Activated T-helper 1 cell treated with anti-CD3 and anti-CD28 coated beads, Interleukin-12 subunit alpha, Interleukin-12 subunit beta, Interleukin-2, Interleukin-4 antibody, amounts not matched to agents 30 ng/mL and 10 ng/mL and 1 ng/mL, durations not matched to agents 14 hours and 24 hours and 36 hours (primary cell): ENCODE measurements at regions of chr2 and their contacts with region 1.

Region 1: DNA sequence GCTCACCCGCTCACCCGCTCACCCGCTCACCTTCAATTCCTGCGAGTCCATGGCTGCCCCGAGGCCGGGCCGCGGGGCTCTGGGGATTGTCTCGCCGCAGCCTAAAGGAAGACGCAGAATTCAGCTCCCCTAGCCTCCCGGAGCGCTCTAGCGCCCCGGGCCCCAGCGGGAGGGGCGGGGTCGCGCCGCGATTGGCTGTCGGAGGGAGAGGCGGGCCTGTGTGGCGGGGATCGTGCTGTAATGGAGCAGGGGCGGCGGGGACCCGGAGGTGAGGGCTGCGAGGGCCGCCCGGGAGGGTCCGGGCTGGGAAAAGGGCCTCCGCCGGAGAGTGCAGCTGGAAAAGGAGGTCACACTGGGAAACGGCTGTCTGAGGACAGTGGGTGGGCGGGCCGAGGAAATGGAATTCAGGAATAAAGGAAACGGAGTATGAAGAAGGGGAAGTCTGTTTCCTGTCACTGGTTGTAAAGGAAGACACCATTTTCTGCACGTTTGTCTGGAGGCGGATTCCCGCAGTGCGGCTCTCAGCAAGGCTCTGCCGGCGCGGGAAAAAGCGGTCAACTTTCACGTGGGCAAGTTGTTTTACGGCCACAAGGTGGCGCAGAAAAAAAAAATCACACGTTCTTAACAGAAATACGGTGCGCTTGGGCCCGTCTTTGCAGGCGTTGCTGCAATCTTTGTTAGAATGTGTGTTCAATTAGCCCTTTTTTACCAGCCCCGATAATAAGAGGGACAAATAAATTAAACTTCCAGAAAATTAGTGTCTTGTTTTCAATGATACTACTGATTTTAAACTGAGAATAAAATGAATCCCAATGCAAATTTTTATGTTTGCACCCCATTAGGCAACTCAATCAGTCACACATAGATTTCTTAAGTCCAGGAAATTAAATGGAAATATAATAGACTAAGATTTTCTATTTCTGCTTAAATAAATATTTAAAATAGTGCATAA is at the start of gene TTC21B:
- DNase-seq: peak; percentile 92
- H3K4me3 Mint-ChIP-seq: peak within 1 kb of the TSS; percentile 54
- H3K27ac Mint-ChIP-seq: no peak within 1 kb of the TSS
- H3K4me1 Mint-ChIP-seq: peaks cover 11% of the 10 kb centered on the region
- H3K27me3 Mint-ChIP-seq: no peaks in the 10 kb centered on the region
- total RNA-seq, gene TTC21B: 21.0 and 24.6 TPM in 2 replicates

Region 2: GRCh38 chr2:165794536-165794928 is 159.4 kb before region 1 on chr2:
- intact Hi-C with region 1: loop called (anchors 2 kb)
- DNase-seq: peak; percentile 71
- H3K4me3 Mint-ChIP-seq: peak overlapping the region; percentile 89
- H3K27ac Mint-ChIP-seq: peak overlapping the region; percentile 90
- H3K4me1 Mint-ChIP-seq: peaks cover 40% of the 10 kb centered on the region
- H3K27me3 Mint-ChIP-seq: peaks cover 2% of the 10 kb centered on the region

Region 3: GRCh38 chr2:165920748-165921147 is 33.2 kb before region 1 on chr2:
- intact Hi-C with region 1: loop called (anchors 2 kb)
- DNase-seq: no peak
- H3K4me3 Mint-ChIP-seq: no peak overlapping the region
- H3K27ac Mint-ChIP-seq: peak overlapping the region; percentile 3
- H3K4me1 Mint-ChIP-seq: peaks cover 21% of the 10 kb centered on the region
- H3K27me3 Mint-ChIP-seq: no peaks in the 10 kb centered on the region

Region 4: GRCh38 chr2:166127217-166128155 is 173.6 kb after region 1 on chr2 and contains the start of gene SCN1A:
- intact Hi-C with region 1: loop called (anchors 1 kb)
- DNase-seq: no peak
- H3K4me3 Mint-ChIP-seq: no peak within 1 kb of the TSS
- H3K27ac Mint-ChIP-seq: no peak within 1 kb of the TSS
- H3K4me1 Mint-ChIP-seq: no peaks in the 10 kb centered on the region
- H3K27me3 Mint-ChIP-seq: peaks cover 9% of the 10 kb centered on the region
- total RNA-seq, gene SCN1A: not detected in 2 replicates

Region 5: DNA sequence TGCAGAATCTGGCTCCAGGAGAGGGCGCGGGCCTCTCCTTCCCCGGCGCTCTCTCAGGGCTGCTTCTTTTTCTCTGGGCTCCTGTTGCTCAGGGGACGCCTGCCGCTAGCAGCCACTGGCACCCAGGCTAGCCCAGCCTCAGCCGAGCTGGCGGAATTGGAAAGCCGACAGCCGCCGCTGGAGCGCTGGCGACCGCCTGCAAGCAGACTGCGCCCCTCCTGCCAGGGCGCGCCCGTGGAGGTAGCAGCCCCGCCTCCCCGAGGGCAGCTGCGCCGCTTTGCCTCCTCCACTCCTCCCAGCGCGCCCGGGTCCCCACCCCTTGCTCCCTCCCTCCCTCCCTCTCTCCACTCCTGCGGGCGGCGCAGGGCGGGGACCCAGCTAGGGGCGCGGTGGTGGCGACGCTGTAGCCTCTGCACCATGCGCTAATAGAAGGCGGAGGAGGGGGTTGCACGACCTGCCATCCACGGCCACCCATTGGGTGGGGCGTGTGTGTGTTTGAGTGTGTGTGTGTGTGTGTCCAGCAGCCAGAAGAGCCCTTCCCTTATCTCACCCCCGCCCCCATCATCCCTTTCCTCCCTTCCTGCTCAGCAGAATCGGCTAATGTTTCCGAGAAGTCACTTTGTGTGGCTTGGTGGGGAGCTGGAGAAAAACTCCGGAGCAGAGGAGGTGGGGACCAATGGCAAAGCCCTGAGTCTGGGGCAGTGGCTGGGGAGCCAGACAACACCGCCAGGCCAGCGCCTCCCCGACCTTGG is 422.0 kb after region 1 on chr2 and contains the start of gene SCN9A:
- intact Hi-C with region 1: loop called (anchors 10 kb)
- DNase-seq: peak; percentile 29
- H3K4me3 Mint-ChIP-seq: peak within 1 kb of the TSS; percentile 83
- H3K27ac Mint-ChIP-seq: no peak within 1 kb of the TSS
- H3K4me1 Mint-ChIP-seq: peaks cover 24% of the 10 kb centered on the region
- H3K27me3 Mint-ChIP-seq: peaks cover 43% of the 10 kb centered on the region
- total RNA-seq, gene SCN9A: 0.07 and 0.13 TPM in 2 replicates